Activated CD8-positive, alpha-beta T cell treated with anti-CD3 and anti-CD28 coated beads for 36 hours (primary cell): ENCODE measurements at regions of chr9 and their contacts with region 1.

Region 1: GRCh38 chr9:100322954-100323536 is 29.7 kb downstream of the TEX10 start:
- DNase-seq: peak; percentile 63
- ATAC-seq: no peak
- H3K4me3 Mint-ChIP-seq: no peak overlapping the region
- H3K27ac Mint-ChIP-seq: no peak overlapping the region
- H3K4me1 Mint-ChIP-seq: peaks cover 11% of the 10 kb centered on the region
- H3K27me3 Mint-ChIP-seq: no peaks in the 10 kb centered on the region
- CTCF ChIP-seq: peak; percentile 74

Region 2: DNA sequence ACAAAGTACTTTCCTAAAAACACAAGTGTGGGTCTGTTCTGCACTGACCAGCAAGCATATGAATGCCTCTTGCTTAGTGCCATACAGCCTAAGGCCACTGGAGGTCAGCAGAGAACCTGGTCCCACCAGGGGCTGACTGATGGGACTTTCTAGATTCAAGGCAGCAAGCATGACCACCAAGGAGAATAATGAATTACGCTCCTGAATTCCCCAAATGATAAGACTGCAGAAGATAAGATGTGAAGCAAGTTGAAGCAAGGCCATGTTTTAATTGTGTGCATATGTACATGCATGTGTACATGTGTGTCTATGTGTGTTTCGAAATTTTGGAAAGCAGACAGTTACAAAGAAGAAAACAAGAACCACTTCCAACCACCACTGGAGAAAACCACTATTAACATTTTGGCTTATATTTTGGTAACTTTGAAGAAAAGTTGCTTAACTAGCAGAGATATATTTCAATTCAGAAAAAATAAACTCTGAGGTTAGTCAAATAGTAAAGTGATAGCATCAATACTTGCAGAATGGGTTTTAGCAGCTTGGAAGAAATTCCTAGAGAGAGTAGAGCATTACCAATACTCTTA is 294.8 kb before region 1 on chr9:
- CTCF ChIA-PET with region 1: interaction called, 9 read pairs
- POLR2A ChIA-PET with region 1: no interaction called
- intact Hi-C with region 1: loop called (anchors 10 kb)
- DNase-seq: peak; percentile 84
- ATAC-seq: peak; percentile 100
- H3K4me3 Mint-ChIP-seq: no peak overlapping the region
- H3K27ac Mint-ChIP-seq: no peak overlapping the region
- H3K4me1 Mint-ChIP-seq: peaks cover 9% of the 10 kb centered on the region
- H3K27me3 Mint-ChIP-seq: no peaks in the 10 kb centered on the region
- CTCF ChIP-seq: peak; percentile 89

Region 3: DNA sequence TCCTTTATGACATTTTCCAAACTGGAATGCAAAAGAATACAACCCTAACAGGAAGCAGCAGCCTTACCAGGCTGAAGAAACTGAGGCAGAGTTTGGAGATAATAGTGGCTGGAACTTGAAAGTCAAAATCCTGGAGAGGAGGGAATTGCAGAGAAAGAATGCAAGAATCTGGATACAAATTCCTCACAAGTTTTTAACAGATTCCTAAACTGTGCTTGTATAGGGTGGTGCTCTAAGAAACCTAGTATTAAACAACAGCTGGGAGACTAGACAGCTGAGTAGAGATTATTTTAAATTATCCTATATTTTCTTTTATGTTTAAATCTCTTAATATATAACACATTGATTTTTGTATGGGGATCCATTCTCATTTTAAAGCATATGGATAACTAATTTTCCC is 193.3 kb before region 1 on chr9:
- CTCF ChIA-PET with region 1: no interaction called
- POLR2A ChIA-PET with region 1: no interaction called
- intact Hi-C with region 1: no loop called
- DNase-seq: no peak
- ATAC-seq: no peak
- H3K4me3 Mint-ChIP-seq: no peak overlapping the region
- H3K27ac Mint-ChIP-seq: no peak overlapping the region
- H3K4me1 Mint-ChIP-seq: no peaks in the 10 kb centered on the region
- H3K27me3 Mint-ChIP-seq: no peaks in the 10 kb centered on the region
- CTCF ChIP-seq: no peak

Region 4: DNA sequence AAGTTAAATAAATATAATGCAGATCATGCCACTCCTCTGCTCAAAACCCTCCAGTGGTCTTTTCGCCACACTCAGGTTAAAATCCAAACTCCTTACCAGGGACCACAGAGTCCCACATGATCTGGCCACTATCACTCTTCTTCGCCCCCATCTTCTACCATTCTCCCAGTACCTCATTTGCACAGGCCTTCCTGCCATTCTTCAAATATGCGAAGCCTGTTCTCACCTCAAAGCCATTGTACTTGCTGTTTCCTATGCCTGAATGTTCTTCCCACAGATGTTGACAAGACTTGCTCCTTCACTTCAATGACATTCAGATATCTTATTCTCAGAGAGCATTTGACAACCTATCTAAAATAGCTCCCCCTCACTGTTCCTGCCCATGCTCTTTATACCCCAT is 18.8 kb after region 1 on chr9:
- CTCF ChIA-PET with region 1: interaction called, 22 read pairs
- POLR2A ChIA-PET with region 1: interaction called, 4 read pairs
- intact Hi-C with region 1: no loop called
- DNase-seq: no peak
- ATAC-seq: no peak
- H3K4me3 Mint-ChIP-seq: no peak overlapping the region
- H3K27ac Mint-ChIP-seq: no peak overlapping the region
- H3K4me1 Mint-ChIP-seq: peaks cover 31% of the 10 kb centered on the region
- H3K27me3 Mint-ChIP-seq: no peaks in the 10 kb centered on the region
- CTCF ChIP-seq: no peak

Region 5: DNA sequence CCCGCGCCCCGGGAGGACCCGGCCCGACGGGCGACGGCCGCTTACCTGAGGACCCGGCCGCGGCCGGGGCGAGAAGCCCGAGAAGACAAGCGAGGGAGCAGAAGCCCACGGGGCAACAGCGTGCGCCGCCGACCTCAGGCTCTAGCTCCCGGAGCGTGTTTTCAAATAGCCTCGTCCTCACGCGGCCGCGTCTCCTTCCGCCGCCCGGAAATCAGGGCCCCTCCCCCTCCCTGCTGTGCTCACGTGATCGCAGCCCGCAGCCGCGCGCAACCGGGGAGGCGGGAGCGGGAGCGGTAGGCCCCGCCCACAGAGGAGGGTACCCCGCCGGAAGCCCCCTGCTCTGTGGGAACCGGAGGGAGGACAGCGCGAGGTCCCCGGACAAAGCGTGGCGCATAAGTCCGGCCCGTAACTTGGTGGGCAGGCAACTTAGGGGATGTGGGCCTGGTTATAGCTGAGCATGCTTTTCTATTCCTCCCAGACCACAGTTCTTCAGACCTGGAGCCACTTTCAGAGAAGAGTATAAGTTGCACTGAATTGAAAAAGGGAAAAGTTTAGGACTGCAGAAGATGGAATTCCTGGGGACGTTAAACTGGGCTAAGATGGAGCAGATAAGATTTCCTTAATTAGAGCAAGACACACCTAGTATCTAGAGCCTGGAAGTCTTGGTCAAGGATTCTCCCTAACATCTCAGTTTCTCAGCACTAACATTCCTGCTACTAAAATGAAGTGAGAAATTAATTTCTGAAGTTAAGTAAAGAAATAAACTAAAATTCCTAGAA is 29.9 kb after region 1 on chr9 and contains the start of gene TEX10:
- CTCF ChIA-PET with region 1: interaction called, 13 read pairs
- POLR2A ChIA-PET with region 1: no interaction called
- intact Hi-C with region 1: no loop called
- DNase-seq: peak; percentile 89
- ATAC-seq: peak; percentile 93
- H3K4me3 Mint-ChIP-seq: peak within 1 kb of the TSS; percentile 89
- H3K27ac Mint-ChIP-seq: peak within 1 kb of the TSS; percentile 81
- H3K4me1 Mint-ChIP-seq: peaks cover 49% of the 10 kb centered on the region
- H3K27me3 Mint-ChIP-seq: no peaks in the 10 kb centered on the region
- CTCF ChIP-seq: no peak
- total RNA-seq, gene TEX10: 26.6 to 30.2 TPM

Region 6: GRCh38 chr9:100567856-100568255 is 244.8 kb after region 1 on chr9:
- CTCF ChIA-PET with region 1: no interaction called
- POLR2A ChIA-PET with region 1: no interaction called
- intact Hi-C with region 1: no loop called
- DNase-seq: no peak
- ATAC-seq: no peak
- H3K4me3 Mint-ChIP-seq: no peak overlapping the region
- H3K27ac Mint-ChIP-seq: no peak overlapping the region
- H3K4me1 Mint-ChIP-seq: no peaks in the 10 kb centered on the region
- H3K27me3 Mint-ChIP-seq: no peaks in the 10 kb centered on the region
- CTCF ChIP-seq: no peak